Activated T-helper 2 cell treated with anti-CD3 and anti-CD28 coated beads, Interferon-gamma antibody, Interleukin-2, Interleukin-4, amounts not matched to agents 10 μg/mL and 5 μg/mL and 100 μg/mL, durations not matched to agents 14 hours and 24 hours and 36 hours (primary cell): ENCODE measurements at regions of chr16 and their contacts with region 1.

Region 1: DNA sequence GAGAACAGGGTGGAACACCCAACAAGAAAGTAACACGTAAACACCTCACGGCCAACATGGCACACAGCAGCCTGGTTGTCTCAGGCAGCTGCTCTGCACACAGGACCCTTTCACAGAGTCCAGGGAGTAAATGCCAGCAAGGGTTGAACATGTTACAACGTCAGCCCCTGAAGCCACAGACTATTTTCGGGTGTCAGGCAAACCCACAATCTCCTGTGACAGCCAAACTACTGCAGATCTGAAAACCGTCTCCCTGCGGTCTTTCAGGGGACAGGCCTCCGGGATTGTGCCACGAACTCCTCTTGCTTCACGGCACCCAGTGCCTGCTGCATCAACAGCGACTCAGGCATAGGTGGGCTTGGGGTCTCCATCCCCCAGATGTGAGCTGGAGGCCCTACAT is 127.7 kb downstream of the XYLT1 start:
- DNase-seq: peak; percentile 59
- H3K4me3 Mint-ChIP-seq: peak overlapping the region; percentile 69
- H3K27ac Mint-ChIP-seq: peak overlapping the region; percentile 93
- H3K4me1 Mint-ChIP-seq: peaks cover 67% of the 10 kb centered on the region
- H3K27me3 Mint-ChIP-seq: no peaks in the 10 kb centered on the region

Region 2: GRCh38 chr16:17050468-17050867 is 292.6 kb before region 1 on chr16:
- intact Hi-C with region 1: no loop called
- DNase-seq: no peak
- H3K4me3 Mint-ChIP-seq: no peak overlapping the region
- H3K27ac Mint-ChIP-seq: no peak overlapping the region
- H3K4me1 Mint-ChIP-seq: peaks cover 2% of the 10 kb centered on the region
- H3K27me3 Mint-ChIP-seq: peaks cover 4% of the 10 kb centered on the region

Region 3: DNA sequence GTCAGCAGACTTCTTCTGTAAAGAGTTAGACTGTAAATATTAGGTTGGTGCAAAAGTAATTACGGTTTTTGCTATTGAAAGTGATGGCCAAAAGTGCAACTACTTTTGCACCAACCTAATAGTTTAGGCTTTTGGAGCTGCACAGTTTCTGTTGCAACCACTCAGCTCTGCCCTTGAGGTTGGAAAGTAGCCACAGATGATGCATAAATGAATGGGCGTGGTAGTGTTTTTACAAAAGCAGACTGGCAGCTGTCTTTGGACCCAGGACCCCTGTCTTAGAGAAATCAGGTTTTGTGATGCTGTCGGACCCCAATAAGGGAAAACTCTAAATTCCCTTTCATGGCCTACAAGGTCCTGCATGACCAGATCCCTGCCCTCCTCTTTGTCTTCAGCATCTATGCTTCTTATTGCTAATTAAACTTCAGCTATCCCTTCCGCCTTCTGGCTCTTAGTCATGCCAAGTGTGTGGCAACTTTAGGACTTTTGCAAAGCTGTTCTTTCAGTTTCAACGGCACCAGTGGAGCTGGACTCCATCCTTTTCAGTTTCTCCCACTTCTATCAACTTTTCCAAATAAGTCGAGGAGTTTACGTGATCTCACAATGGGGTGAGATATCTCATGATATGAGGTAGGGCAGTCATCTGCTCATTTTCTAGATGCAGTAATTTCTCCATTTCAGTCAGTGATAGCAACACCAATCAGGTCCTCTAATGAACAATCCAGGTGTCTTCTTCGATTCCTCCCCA is 104.6 kb before region 1 on chr16:
- intact Hi-C with region 1: loop called (anchors 1 kb)
- DNase-seq: peak; percentile 15
- H3K4me3 Mint-ChIP-seq: no peak overlapping the region
- H3K27ac Mint-ChIP-seq: peak overlapping the region; percentile 28
- H3K4me1 Mint-ChIP-seq: peaks cover 23% of the 10 kb centered on the region
- H3K27me3 Mint-ChIP-seq: no peaks in the 10 kb centered on the region

Region 4: GRCh38 chr16:17313085-17313611 is 29.9 kb before region 1 on chr16:
- intact Hi-C with region 1: no loop called
- DNase-seq: no peak
- H3K4me3 Mint-ChIP-seq: no peak overlapping the region
- H3K27ac Mint-ChIP-seq: no peak overlapping the region
- H3K4me1 Mint-ChIP-seq: peaks cover 22% of the 10 kb centered on the region
- H3K27me3 Mint-ChIP-seq: no peaks in the 10 kb centered on the region

Region 5: GRCh38 chr16:17364319-17365210 is 21.5 kb after region 1 on chr16:
- intact Hi-C with region 1: loop called (anchors 1 kb)
- DNase-seq: peak; percentile 62
- H3K4me3 Mint-ChIP-seq: peak overlapping the region; percentile 20
- H3K27ac Mint-ChIP-seq: peak overlapping the region; percentile 77
- H3K4me1 Mint-ChIP-seq: peaks cover 85% of the 10 kb centered on the region
- H3K27me3 Mint-ChIP-seq: no peaks in the 10 kb centered on the region

Region 6: DNA sequence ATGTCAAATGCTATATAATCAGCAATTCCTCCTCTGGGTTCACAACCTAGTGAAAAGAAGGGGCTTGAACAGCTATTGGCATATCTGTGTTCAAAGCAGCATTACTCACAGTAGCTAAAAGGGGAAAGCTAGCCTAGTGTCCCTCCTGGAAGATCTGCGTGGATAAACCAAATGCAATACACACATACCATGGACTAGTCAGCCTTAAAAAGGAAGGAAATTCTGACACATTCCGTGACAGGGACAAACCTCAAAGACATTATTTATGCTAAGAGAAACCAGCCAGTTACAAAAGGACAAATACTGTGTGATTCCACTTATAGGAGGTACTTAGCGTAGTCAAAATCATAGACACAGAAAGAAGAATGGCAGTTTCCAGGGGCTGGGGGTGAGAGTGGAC is 37.6 kb after region 1 on chr16:
- intact Hi-C with region 1: loop called (anchors 5 kb)
- DNase-seq: no peak
- H3K4me3 Mint-ChIP-seq: peak overlapping the region; percentile 3
- H3K27ac Mint-ChIP-seq: peak overlapping the region; percentile 40
- H3K4me1 Mint-ChIP-seq: peaks cover 49% of the 10 kb centered on the region
- H3K27me3 Mint-ChIP-seq: no peaks in the 10 kb centered on the region

Region 7: DNA sequence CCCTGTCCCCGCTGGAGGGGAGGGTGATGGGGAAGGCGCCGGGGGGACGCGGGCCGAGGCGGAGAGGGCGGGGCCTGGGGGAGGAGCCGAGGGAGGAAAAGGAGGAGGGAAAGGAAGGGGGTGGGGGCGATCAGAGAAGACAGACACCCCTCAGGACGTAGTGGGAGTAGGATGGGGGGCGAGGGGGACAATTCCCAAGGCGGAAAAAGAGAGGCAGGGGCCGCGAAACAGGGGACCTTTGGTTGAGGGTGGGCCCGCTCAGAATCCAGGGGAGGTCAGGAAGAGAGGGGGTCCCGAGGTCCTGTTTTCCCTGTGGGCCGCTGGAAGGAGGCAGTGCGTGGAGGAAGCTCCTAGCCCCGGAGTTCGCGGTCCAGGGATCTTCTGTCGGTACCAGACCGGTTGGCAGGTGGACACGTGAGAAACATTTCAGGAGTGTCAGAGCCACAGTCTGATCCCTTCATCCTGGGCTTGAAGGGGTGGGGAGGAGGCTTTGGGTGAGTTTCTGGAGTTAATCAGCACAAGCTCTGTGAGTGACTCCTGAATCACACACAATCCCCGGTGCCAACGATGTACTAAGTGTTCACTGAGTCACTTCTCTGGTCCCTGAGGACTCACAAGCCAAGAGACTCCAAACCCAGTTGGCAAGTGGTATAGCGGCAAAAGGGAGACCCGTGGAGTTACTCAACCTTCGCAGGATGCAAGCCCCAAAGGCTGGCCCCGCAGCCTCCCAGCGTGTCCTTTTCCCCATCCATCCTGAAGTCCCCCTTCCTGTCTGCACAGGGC is 128.1 kb after region 1 on chr16 and contains the start of gene XYLT1:
- intact Hi-C with region 1: loop called (anchors 2 kb)
- DNase-seq: peak; percentile 27
- H3K4me3 Mint-ChIP-seq: peak within 1 kb of the TSS; percentile 88
- H3K27ac Mint-ChIP-seq: peak within 1 kb of the TSS; percentile 77
- H3K4me1 Mint-ChIP-seq: peaks cover 62% of the 10 kb centered on the region
- H3K27me3 Mint-ChIP-seq: no peaks in the 10 kb centered on the region
- total RNA-seq, gene XYLT1: 15.7 and 18.9 TPM in 2 replicates

Region 8: GRCh38 chr16:17887963-17888362 is 544.9 kb after region 1 on chr16:
- intact Hi-C with region 1: no loop called
- DNase-seq: no peak
- H3K4me3 Mint-ChIP-seq: no peak overlapping the region
- H3K27ac Mint-ChIP-seq: no peak overlapping the region
- H3K4me1 Mint-ChIP-seq: no peaks in the 10 kb centered on the region
- H3K27me3 Mint-ChIP-seq: peaks cover 3% of the 10 kb centered on the region